ENCODE measurements at regions of chr4 and their contacts with region 1.

Region 1: DNA sequence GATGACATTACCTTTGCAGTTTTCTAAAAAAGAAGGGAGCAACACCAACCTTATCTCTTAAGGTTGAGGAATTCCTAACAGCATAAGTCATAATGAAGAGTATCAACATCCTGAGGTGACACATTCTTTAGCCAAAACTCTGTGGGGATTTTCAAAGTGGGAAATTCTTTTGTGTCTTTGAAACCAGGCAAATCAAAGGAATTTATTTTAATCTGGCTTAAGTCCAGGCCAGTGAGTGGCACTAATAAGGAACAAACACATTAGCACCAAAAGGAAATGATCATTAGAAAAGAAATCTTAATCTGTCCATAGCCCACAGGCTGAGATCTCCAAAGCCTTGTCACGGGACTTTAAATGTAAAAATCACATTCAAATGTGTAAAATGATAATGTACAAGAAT is 110.1 kb downstream of the LARP7 start:
- DNase-seq: peak; percentile 75
- H3K4me3 ChIP-seq: no peak overlapping the region
- H3K27ac ChIP-seq: no peak overlapping the region
- H3K4me1 ChIP-seq: peaks cover 18% of the 10 kb centered on the region
- H3K27me3 ChIP-seq: no peaks in the 10 kb centered on the region
- CTCF ChIP-seq: no peak

Region 2: DNA sequence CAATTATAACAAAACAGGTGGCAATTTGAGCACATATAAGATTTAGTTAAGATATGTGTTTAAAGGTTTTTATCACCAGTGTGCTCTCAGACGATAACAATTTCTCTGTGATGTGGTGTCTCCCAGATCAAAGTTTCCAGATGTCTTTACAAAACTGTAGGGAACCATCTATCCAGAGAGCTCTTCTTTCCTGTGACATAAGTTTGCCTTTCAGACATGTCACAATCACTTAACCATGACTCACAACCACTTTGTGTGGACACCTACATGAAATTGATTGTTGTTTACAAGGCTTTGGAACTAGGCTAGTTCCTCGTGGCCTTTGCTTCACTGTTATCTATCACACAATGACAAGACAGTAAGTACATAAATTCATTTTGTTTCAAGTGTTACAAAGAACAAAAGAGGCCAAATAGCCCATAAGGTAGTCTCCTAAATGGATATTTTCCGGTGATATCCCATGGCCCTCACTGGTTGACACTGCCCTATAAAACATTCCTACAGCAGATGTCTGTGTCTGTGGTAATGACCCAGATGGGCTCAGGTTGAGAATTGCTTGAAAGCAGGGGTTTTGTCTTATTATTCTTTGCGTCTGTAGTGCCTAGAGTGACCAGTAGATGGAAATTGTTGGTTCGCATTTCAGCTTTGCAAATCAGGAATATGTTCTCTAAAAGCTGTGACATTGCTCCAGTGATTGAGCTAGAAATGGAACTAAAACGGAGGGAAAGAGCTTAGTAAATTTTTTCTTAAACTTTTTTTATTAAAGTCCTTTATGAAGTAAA is 899.5 kb before region 1 on chr4:
- CTCF ChIA-PET with region 1: no interaction called
- POLR2A ChIA-PET with region 1: no interaction called
- intact Hi-C with region 1: no loop called
- DNase-seq: peak; percentile 37
- H3K4me3 ChIP-seq: no peak overlapping the region
- H3K27ac ChIP-seq: no peak overlapping the region
- H3K4me1 ChIP-seq: no peaks in the 10 kb centered on the region
- H3K27me3 ChIP-seq: no peaks in the 10 kb centered on the region
- CTCF ChIP-seq: peak; percentile 48; the same call in 1 of the 2 replicates

Region 3: GRCh38 chr4:112968451-112969159 is 221.6 kb after region 1 on chr4:
- CTCF ChIA-PET with region 1: no interaction called
- POLR2A ChIA-PET with region 1: interaction called, 10 read pairs
- intact Hi-C with region 1: no loop called
- DNase-seq: no peak
- H3K4me3 ChIP-seq: no peak overlapping the region
- H3K27ac ChIP-seq: no peak overlapping the region
- H3K4me1 ChIP-seq: peaks cover 39% of the 10 kb centered on the region
- H3K27me3 ChIP-seq: no peaks in the 10 kb centered on the region
- CTCF ChIP-seq: no peak